ENCODE measurements at regions of chr1 and their contacts with region 1.

Region 1: GRCh38 chr1:91511386-91511785 is 10.7 kb downstream of the CDC7 start:
- DNase-seq: no peak
- ATAC-seq: peak in 2 of 8 donors; percentile 46 to 52
- H3K4me3 ChIP-seq: no peak overlapping the region
- H3K27ac ChIP-seq: no peak overlapping the region
- H3K4me1 ChIP-seq: no peaks in the 10 kb centered on the region
- H3K27me3 ChIP-seq: no peaks in the 10 kb centered on the region
- CTCF ChIP-seq: peak; percentile 29 to 78 (median 67)

Region 2: GRCh38 chr1:91924146-91924545 is 412.8 kb after region 1 on chr1:
- intact Hi-C with region 1: loop called (anchors 1 to 5 kb)
- DNase-seq: no peak
- ATAC-seq: peak in 1 of 8 donors; percentile 16
- H3K4me3 ChIP-seq: no peak overlapping the region
- H3K27ac ChIP-seq: peak overlapping the region in 1 of 10 donors; percentile 45
- H3K4me1 ChIP-seq: peaks cover 0 to 8% (median 2%) of the 10 kb centered on the region in 9 donors
- H3K27me3 ChIP-seq: no peaks in the 10 kb centered on the region
- CTCF ChIP-seq: no peak

Region 3: DNA sequence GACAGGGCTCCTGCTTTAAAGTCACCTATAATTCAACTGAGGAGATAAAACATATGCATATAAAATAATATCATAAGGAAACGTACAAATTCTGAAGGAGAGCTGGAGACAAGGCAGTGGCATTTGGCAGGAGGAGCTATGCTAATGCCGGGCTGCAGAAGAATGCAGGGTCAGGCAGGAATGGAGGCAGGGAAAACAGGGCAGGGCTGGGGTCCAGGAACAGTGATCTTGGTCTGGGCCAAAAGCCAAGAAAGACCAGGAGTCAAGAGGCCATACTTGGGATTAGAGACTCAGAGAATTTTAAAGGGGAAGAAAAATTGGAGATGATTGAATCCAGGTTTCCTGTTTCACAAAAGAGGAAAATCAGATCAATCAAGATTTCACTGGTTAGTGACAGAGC is 417.9 kb after region 1 on chr1:
- intact Hi-C with region 1: loop called (anchors 1 to 5 kb)
- DNase-seq: peak in 1 of 2 donors; percentile 23
- ATAC-seq: peak in 2 of 8 donors; percentile 43 to 70
- H3K4me3 ChIP-seq: no peak overlapping the region
- H3K27ac ChIP-seq: no peak overlapping the region
- H3K4me1 ChIP-seq: peaks cover 0 to 8% (median 3%) of the 10 kb centered on the region in 9 donors
- H3K27me3 ChIP-seq: no peaks in the 10 kb centered on the region
- CTCF ChIP-seq: no peak

Measured in heart right ventricle (tissue), 16 donors.